BJ (cell line): ENCODE measurements at regions of chr18 and their contacts with region 1.

Region 1: GRCh38 chr18:78525366-78526111 is 454.1 kb upstream of the SALL3 start:
- DNase-seq: no peak
- H3K4me3 ChIP-seq: no peak overlapping the region
- H3K27me3 ChIP-seq: no peaks in the 10 kb centered on the region
- CTCF ChIP-seq: no peak

Region 2: DNA sequence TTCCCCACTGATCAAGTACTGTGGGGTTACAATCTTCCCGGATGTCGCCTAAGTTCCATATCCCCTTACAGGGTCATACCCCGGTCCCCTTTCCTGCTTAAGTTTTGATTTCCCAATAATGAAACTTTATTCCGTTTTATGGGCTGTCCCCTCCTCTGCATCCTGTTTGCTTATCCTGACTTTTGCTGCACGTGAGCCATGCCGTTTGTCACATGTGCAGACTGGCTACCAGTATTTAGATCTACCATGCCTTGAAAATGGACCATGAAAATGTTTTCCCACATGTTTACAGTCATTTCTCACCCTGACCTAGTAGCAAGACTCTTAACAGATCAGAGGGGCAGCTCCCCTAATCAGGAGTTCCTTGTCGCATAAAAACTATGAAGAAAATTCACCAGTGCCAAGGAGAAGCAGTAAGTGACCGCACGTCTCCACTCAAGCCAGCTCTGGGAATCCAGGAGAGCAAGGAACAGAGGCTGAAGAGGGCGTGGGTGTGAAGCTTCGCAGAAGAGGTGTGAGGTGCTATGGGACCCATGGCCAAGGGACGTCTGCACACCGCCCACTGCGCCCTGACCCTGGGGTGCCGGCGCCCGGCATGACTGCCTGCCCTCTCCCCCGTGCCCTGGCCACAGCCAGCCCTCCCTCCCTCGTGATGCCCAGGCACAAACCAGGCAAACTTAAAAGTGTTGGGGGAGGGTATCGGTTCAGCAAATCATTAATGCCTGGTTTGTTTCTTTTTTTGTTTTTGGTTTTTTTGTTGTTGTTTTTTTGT is 13.3 kb after region 1 on chr18:
- CTCF ChIA-PET with region 1: no interaction called
- POLR2A ChIA-PET with region 1: interaction called, 10 read pairs
- DNase-seq: no peak
- H3K4me3 ChIP-seq: no peak overlapping the region
- H3K27me3 ChIP-seq: no peaks in the 10 kb centered on the region
- CTCF ChIP-seq: no peak

Region 3: GRCh38 chr18:78587096-78587495 is 61.6 kb after region 1 on chr18:
- CTCF ChIA-PET with region 1: no interaction called
- POLR2A ChIA-PET with region 1: no interaction called
- DNase-seq: no peak
- H3K4me3 ChIP-seq: no peak overlapping the region
- H3K27me3 ChIP-seq: no peaks in the 10 kb centered on the region
- CTCF ChIP-seq: no peak